HEK293T (cell line): ENCODE measurements at regions of chr11 and their contacts with region 1.

Region 1: GRCh38 chr11:67391304-67392132 is at the start of gene RAD9A:
- DNase-seq: peak; percentile 97

Region 2: GRCh38 chr11:67323526-67323925 is 68.0 kb before region 1 on chr11:
- CTCF ChIA-PET with region 1: no interaction called
- POLR2A ChIA-PET with region 1: no interaction called
- DNase-seq: no peak

Region 3: DNA sequence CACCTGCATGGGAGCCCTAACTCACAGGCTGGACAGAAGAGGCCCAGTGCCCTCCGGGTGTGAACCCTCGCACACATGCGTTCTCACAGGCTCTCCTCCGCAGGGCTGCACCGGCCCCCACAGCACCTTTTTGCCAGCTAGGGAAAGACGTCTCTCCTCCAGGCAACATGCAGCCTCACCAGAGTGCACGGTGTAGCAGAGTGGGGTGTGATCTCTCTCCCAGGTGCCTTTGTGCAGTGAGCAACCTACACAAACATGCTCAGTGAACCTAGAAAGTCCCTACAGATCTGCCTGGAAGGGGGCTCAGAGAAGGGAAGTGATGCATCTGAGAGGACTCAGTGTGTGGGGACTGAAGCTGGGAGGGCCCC is 20.3 kb after region 1 on chr11:
- CTCF ChIA-PET with region 1: no interaction called
- POLR2A ChIA-PET with region 1: interaction called, 10 read pairs
- DNase-seq: no peak

Region 4: DNA sequence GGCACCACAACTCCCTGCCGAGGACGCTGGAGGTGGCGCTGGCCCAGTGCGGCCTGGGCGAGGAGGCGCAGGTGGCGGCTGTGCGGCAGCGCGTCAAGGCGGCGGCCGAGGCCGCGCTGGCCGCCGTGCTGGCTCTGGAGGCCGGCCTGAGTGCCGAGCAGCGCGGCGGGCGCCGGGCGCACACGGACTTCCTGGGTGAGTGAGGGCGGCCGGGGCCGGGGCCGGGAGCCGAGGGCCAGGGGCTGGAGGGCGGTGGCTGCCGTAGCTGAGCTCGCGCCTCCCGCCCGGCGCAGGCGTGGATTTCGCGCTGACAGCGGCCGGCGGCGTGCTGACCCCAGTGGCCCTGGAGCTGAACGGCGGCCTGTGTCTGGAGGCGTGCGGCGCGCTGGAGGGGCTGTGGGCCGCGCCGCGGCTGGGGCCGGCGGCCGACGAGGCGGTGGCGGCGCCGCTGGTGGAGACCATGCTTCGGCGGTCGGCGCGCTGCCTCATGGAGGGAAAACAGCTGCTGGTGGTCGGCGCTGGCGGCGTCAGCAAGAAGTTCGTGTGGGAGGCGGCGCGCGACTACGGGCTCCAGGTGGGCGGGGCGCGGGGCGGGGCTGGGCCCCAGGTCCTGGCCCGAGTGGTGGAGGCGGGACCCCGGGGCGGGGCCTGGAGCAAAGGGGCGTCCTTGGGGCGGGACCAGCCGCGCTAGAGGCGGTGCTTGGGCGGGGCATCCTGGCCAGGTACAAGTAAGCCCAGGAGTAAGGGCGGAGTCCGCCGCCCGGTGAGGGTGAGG is 29.3 kb after region 1 on chr11:
- CTCF ChIA-PET with region 1: no interaction called
- POLR2A ChIA-PET with region 1: interaction called, 13 read pairs
- DNase-seq: peak; percentile 99